Right lobe of liver (tissue), 6 donors: ENCODE measurements at regions of chr9 and their contacts with region 1.

Region 1: DNA sequence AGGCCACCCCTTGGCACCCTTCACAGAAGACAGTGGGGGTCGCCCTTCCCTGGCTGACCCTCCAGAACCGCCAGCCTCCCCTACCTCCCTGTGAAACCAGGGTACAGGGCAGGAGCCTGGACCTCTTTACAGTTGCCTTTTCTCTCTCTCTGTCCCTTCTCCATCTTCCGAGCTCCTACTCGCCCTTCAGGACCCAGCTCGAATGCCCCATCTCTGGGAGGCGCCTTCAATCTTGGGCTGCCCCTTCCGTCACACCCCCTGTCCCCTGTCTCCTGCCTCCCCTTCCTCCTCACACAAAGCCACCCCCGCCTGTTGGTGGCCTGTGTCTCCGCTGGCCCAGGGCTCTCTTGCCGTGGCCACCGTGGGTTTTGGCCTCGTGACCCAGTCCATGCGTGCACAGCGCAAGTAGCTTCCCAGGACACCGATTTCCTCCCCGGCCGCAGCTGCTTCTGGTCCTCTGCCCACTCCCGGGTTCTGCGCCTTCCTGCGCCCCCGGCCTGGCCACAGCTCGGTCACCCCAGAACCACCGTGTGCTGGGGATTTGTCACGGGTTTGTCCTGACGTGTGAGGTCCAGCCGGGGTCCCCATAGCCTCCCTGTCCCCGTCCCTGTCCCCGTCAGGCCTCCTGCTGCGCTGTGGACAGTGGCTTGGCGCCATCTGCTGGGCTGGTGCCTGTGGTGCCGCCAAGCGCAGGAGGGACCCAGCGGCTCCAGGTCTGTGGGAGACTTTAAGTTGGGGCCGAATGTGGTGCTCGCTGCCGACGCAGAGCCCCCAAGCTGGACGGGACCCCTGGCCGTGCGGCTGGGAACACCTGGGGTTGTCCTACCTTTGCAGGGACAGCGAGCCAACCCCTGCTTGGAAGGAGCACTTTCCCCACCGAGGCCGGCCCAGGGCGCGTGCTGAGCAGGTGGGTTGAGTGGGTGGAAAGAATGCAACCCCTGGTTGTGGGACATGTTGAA is 4.0 kb upstream of the TMEM250 start:
- DNase-seq: peak; percentile 79 to 84 (median 83)
- ATAC-seq: peak; percentile 25 to 55 (median 51)
- H3K4me3 ChIP-seq: peak overlapping the region in 1 of 3 donors; percentile 9
- H3K27ac ChIP-seq: no peak overlapping the region
- H3K4me1 ChIP-seq: peaks cover 0 to 28% (median 10%) of the 10 kb centered on the region in 4 donors
- H3K27me3 ChIP-seq: no peaks in the 10 kb centered on the region
- CTCF ChIP-seq: peak; percentile 94 to 99 (median 98)
- POLR2A ChIP-seq: no peak

Region 2: DNA sequence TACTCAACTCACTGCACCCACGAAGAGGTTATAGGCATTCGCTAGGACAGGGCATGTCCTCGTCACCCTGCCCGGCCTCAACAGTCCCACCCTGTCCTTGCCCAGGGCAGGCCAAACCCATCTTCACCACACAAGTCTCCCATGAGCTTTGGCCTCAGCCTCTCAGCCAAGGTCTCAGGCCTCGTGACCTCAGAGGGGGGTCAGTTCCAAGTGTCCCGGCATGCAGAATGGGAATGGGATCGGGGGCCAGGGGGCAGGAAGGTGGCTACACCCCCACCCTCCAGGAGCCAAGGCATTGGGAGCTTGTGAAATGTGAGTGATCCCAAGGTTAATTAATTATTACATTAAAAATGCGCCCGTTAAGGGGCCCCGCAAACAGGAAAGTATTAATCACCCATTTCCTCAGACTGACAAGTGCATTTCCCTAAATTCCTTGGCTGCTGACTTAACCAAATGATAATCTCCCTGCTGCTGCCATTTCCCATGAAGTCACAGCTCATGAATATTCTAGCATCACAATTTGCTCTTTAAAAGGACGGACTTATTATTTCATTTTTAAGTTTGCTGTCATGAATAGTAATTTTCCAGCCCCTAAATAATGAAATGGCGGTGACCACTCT is 153.5 kb before region 1 on chr9:
- intact Hi-C with region 1: loop called (anchors 2 to 5 kb)
- DNase-seq: peak in 1 of 3 donors; percentile 57
- ATAC-seq: peak; percentile 7 to 42 (median 24)
- H3K4me3 ChIP-seq: no peak overlapping the region
- H3K27ac ChIP-seq: peak overlapping the region in 2 of 3 donors; percentile 36 to 40
- H3K4me1 ChIP-seq: no peaks in the 10 kb centered on the region
- H3K27me3 ChIP-seq: no peaks in the 10 kb centered on the region
- CTCF ChIP-seq: no peak
- POLR2A ChIP-seq: no peak

Region 3: GRCh38 chr9:136089697-136090045 is 33.0 kb before region 1 on chr9:
- intact Hi-C with region 1: loop called in 1 of 2 experiments (anchors 5 kb)
- DNase-seq: no peak
- ATAC-seq: no peak
- H3K4me3 ChIP-seq: no peak overlapping the region
- H3K27ac ChIP-seq: no peak overlapping the region
- H3K4me1 ChIP-seq: peaks cover 0 to 43% (median 20%) of the 10 kb centered on the region in 4 donors
- H3K27me3 ChIP-seq: no peaks in the 10 kb centered on the region
- CTCF ChIP-seq: peak; percentile 17 to 35 (median 22)
- POLR2A ChIP-seq: no peak

Region 4: GRCh38 chr9:136244122-136244968 is 121.6 kb after region 1 on chr9:
- intact Hi-C with region 1: no loop called
- DNase-seq: no peak
- ATAC-seq: no peak
- H3K4me3 ChIP-seq: peak overlapping the region; percentile 71 to 87 (median 74)
- H3K27ac ChIP-seq: no peak overlapping the region
- H3K4me1 ChIP-seq: peaks cover 0 to 16% (median 4%) of the 10 kb centered on the region in 4 donors
- H3K27me3 ChIP-seq: no peaks in the 10 kb centered on the region
- CTCF ChIP-seq: no peak
- POLR2A ChIP-seq: no peak